Ovary (tissue), 10 donors: ENCODE measurements at regions of chr7 and their contacts with region 1.

Region 1: GRCh38 chr7:104983578-104984539 is 30.1 kb upstream of the KMT2E start:
- DNase-seq: peak; percentile 85 to 92 (median 87)
- H3K4me3 ChIP-seq: peak overlapping the region; percentile 68
- H3K27ac ChIP-seq: peak overlapping the region; percentile 96 to 97
- H3K4me1 ChIP-seq: peaks cover 10% of the 10 kb centered on the region
- H3K27me3 ChIP-seq: no peaks in the 10 kb centered on the region
- CTCF ChIP-seq: peak in 2 of 3 donors; percentile 68 to 75
- EP300 ChIP-seq: peak; percentile 25
- POLR2A ChIP-seq: peak; percentile 64

Region 2: GRCh38 chr7:105088456-105088855 is 104.6 kb after region 1 on chr7:
- intact Hi-C with region 1: no loop called
- DNase-seq: no peak
- H3K4me3 ChIP-seq: no peak overlapping the region
- H3K27ac ChIP-seq: no peak overlapping the region
- H3K4me1 ChIP-seq: no peaks in the 10 kb centered on the region
- H3K27me3 ChIP-seq: no peaks in the 10 kb centered on the region
- CTCF ChIP-seq: no peak
- EP300 ChIP-seq: no peak
- POLR2A ChIP-seq: no peak

Region 3: GRCh38 chr7:105101864-105102263 is 118.0 kb after region 1 on chr7:
- intact Hi-C with region 1: loop called in 2 of 4 experiments (anchors 10 kb)
- DNase-seq: no peak
- H3K4me3 ChIP-seq: no peak overlapping the region
- H3K27ac ChIP-seq: no peak overlapping the region
- H3K4me1 ChIP-seq: no peaks in the 10 kb centered on the region
- H3K27me3 ChIP-seq: no peaks in the 10 kb centered on the region
- CTCF ChIP-seq: no peak
- EP300 ChIP-seq: no peak
- POLR2A ChIP-seq: no peak